Esophagus muscularis mucosa (tissue), 4 donors: ENCODE measurements at regions of chr9 and their contacts with region 1.

Region 1: GRCh38 chr9:130172161-130172857 is at the start of gene NCS1:
- DNase-seq: no peak
- H3K4me3 ChIP-seq: peak within 1 kb of the TSS; percentile 72 to 91 (median 76)
- H3K27ac ChIP-seq: peak within 1 kb of the TSS; percentile 91 to 97 (median 96)
- H3K4me1 ChIP-seq: peaks cover 9 to 55% (median 50%) of the 10 kb centered on the region in 4 donors
- H3K27me3 ChIP-seq: peaks cover 0 to 5% (median 0%) of the 10 kb centered on the region in 4 donors
- CTCF ChIP-seq: no peak
- EP300 ChIP-seq: no peak
- POLR2A ChIP-seq: no peak
- total RNA-seq, gene NCS1: 100 to 206 (median 122) TPM

Region 2: GRCh38 chr9:130215341-130216119 is 43.2 kb after region 1 on chr9:
- intact Hi-C with region 1: loop called (anchors 5 kb)
- DNase-seq: no peak
- H3K4me3 ChIP-seq: no peak overlapping the region
- H3K27ac ChIP-seq: peak overlapping the region; percentile 62 to 96 (median 72)
- H3K4me1 ChIP-seq: peaks cover 3 to 87% (median 72%) of the 10 kb centered on the region in 4 donors
- H3K27me3 ChIP-seq: no peaks in the 10 kb centered on the region
- CTCF ChIP-seq: no peak
- EP300 ChIP-seq: no peak
- POLR2A ChIP-seq: no peak